ENCODE measurements at regions of chr6 and their contacts with region 1.

Region 1: GRCh38 chr6:138007014-138007472 is 100.2 kb downstream of the PERP start:
- DNase-seq: peak; percentile 49
- CTCF ChIP-seq: peak; percentile 45

Region 2: DNA sequence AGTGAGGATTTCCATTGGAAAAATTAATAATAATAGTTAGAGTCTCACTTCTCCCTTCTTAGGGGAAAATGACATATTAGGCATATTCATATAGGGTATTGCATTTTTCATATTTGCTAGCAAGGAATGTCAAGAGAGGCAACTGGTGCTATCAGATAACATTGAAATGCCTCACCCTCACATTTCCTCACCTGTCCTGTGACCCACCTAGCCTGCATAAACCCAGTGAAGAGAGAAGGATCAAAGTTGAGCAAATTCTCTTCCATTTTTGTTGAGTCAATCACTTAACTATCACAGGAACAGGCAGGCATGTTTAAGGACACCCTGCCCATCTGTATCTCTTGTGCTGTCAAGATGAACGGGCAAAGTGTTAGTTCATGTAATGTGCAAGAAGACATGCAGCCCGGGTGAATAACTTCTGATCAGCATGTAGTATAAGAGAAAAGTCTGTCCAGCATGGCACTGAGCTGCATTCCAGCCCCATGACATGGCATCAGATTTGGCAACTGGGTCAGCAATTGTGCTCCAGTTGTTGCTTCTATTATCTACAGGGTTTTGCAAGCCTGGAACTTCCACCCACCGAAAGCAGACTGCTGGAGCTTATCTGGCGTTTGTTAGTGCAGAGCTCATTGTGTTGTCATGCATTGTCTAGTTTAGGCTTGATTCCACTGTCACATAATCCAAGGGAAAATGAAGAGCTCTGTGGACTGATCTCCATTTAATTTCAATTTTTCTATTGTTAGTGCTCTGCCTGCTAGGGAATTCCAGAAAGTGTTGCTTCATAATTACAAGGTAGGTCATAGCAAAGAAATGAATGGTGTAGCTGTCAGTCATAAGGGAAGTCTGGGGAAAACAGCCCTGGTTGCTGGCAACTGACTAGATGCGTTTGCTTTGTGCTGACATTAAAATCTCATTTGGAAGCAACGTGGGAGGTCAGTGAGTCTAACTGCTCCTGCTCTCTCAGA is 278.4 kb before region 1 on chr6:
- CTCF ChIA-PET with region 1: no interaction called
- POLR2A ChIA-PET with region 1: no interaction called
- DNase-seq: no peak
- CTCF ChIP-seq: no peak

Region 3: GRCh38 chr6:137995371-137995770 is 11.7 kb before region 1 on chr6:
- CTCF ChIA-PET with region 1: interaction called, 28 read pairs
- POLR2A ChIA-PET with region 1: no interaction called
- DNase-seq: no peak
- CTCF ChIP-seq: no peak

Region 4: GRCh38 chr6:138036111-138036510 is 29.1 kb after region 1 on chr6:
- CTCF ChIA-PET with region 1: no interaction called
- POLR2A ChIA-PET with region 1: no interaction called
- DNase-seq: no peak
- CTCF ChIP-seq: no peak

Region 5: DNA sequence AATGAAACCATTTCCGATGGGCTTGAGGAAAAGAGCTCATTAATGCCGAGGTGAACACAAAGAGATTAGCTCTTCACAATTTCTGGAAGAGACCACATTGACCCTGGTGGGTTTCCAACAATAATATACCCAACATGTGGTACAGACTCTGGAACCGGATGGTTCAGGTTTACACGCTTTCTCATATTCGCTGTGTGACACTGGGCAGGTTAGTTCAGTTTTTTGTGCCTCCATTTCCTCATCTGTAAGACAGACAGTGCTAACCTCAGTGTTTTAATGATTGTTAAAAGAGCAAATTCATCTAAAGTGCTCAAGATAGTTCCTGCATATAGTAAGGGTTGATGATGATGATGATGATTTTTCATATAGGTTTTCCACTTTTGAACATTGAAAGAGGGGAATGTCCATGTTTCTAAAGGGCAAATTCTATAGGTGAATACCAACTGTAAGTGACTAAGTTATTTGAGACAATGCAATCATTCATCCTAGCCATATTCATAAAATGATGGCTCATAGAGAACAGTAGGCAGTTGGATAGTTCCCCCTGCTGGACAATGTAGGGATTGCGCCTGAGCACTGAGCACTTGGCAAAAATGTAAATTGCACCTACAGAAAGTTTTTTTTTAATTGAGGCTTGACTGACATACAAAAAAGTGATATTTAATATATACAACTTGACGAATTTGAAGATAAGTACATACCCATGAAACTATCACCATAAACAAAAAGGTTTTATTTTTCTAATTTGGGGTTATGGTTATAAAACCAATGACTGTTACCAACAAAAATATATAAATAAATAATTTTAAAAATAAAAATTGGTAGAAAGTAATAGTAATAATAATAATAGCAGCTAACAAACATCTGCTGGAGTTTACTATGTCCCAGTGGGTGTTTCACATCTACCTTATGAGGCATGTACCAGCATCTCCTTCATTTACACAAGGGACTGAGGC is 102.3 kb after region 1 on chr6:
- CTCF ChIA-PET with region 1: interaction called, 33 read pairs
- POLR2A ChIA-PET with region 1: no interaction called
- DNase-seq: peak; percentile 52
- CTCF ChIP-seq: peak; percentile 84

Region 6: GRCh38 chr6:138403801-138404661 is 397.0 kb after region 1 on chr6 and contains the start of gene HEBP2:
- CTCF ChIA-PET with region 1: no interaction called
- POLR2A ChIA-PET with region 1: no interaction called
- DNase-seq: peak; percentile 92
- CTCF ChIP-seq: peak; percentile 65

Region 7: DNA sequence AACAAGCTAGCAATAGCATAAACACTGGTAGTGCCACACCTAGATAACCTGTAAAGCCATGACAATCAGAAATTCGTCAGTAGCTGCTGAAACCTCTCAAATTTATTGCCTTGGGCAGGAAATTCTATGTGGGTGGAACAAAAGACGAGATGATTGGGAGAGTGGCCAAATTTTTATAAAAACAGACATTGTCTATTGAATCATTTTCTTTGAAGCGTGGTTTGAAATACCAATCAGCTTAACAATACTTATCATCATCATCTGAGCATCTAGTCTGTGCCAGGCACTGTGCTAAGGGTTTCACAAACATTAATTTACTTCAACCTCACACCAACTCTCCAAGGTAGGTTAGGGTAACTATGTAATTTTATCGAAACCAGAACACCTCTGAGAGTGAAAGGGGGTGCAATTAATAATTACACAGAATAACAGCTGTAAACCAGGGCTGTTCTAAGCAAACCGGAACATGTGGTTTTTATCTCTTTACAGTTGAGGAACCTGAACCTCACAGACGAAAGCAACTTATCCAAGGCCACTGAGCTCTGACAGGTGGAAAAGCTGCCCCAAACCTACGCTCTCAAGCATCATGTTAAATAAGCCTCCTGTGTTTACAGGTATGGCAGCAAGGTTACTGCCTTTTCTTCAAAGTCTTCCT is 448.8 kb after region 1 on chr6:
- CTCF ChIA-PET with region 1: no interaction called
- POLR2A ChIA-PET with region 1: no interaction called
- DNase-seq: peak; percentile 58
- CTCF ChIP-seq: no peak